ENCODE measurements at regions of chr4 and their contacts with region 1.

Region 1: DNA sequence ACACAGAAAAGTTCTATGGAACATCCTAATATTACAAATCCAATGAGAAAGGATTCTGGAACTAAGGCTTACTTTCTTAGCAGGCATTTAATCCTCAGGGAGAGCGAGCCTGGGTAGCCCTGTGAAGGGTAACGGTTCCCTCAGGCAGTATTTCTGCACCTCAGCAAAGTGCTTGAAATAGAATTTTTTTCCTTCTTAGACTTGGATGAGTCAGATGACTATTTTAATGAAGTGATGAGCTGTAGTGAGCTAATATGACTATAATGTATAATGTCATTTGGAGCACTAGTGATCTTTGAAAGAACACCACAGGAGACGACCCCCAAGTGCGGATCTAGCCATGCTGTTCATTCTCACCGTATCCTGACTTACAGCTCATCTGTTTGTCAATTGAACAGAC is 493.0 kb upstream of the FAM241A start:
- DNase-seq: no peak
- ATAC-seq: no peak
- H3K4me3 Mint-ChIP-seq: no peak overlapping the region
- H3K27ac Mint-ChIP-seq: no peak overlapping the region
- H3K4me1 Mint-ChIP-seq: no peaks in the 10 kb centered on the region
- H3K27me3 Mint-ChIP-seq: peaks cover 1% of the 10 kb centered on the region

Region 2: GRCh38 chr4:111618908-111619307 is 33.3 kb before region 1 on chr4:
- CTCF ChIA-PET with region 1: no interaction called
- POLR2A ChIA-PET with region 1: no interaction called
- intact Hi-C with region 1: no loop called
- DNase-seq: no peak
- ATAC-seq: no peak
- H3K4me3 Mint-ChIP-seq: no peak overlapping the region
- H3K27ac Mint-ChIP-seq: no peak overlapping the region
- H3K4me1 Mint-ChIP-seq: no peaks in the 10 kb centered on the region
- H3K27me3 Mint-ChIP-seq: no peaks in the 10 kb centered on the region

Region 3: GRCh38 chr4:112053825-112054350 is 401.7 kb after region 1 on chr4:
- CTCF ChIA-PET with region 1: no interaction called
- POLR2A ChIA-PET with region 1: no interaction called
- intact Hi-C with region 1: loop called in 1 of 2 experiments (anchors 5 kb)
- DNase-seq: no peak
- ATAC-seq: no peak
- H3K4me3 Mint-ChIP-seq: no peak overlapping the region
- H3K27ac Mint-ChIP-seq: no peak overlapping the region
- H3K4me1 Mint-ChIP-seq: no peaks in the 10 kb centered on the region
- H3K27me3 Mint-ChIP-seq: no peaks in the 10 kb centered on the region